Spleen (tissue), 13 donors: ENCODE measurements at regions of chr2 and their contacts with region 1.

Region 1: GRCh38 chr2:105576440-105577252 is 168.1 kb upstream of the NCK2 start:
- DNase-seq: no peak
- H3K4me3 ChIP-seq: no peak overlapping the region
- H3K27ac ChIP-seq: peak overlapping the region in 7 of 8 donors; percentile 9 to 68 (median 50)
- H3K4me1 ChIP-seq: peaks cover 0 to 17% (median 4%) of the 10 kb centered on the region in 6 donors
- H3K27me3 ChIP-seq: peaks cover 0 to 7% (median 0%) of the 10 kb centered on the region in 7 donors
- CTCF ChIP-seq: peak in 10 of 11 experiments; percentile 13 to 60 (median 46)
- POLR2A ChIP-seq: no peak

Region 2: GRCh38 chr2:106073678-106074406 is 497.2 kb after region 1 on chr2:
- intact Hi-C with region 1: loop called (anchors 10 kb)
- DNase-seq: no peak
- H3K4me3 ChIP-seq: no peak overlapping the region
- H3K27ac ChIP-seq: no peak overlapping the region
- H3K4me1 ChIP-seq: no peaks in the 10 kb centered on the region
- H3K27me3 ChIP-seq: peaks cover 0 to 6% (median 0%) of the 10 kb centered on the region in 7 donors
- CTCF ChIP-seq: no peak
- POLR2A ChIP-seq: no peak